ENCODE measurements at regions of chr21 and their contacts with region 1.

Region 1: DNA sequence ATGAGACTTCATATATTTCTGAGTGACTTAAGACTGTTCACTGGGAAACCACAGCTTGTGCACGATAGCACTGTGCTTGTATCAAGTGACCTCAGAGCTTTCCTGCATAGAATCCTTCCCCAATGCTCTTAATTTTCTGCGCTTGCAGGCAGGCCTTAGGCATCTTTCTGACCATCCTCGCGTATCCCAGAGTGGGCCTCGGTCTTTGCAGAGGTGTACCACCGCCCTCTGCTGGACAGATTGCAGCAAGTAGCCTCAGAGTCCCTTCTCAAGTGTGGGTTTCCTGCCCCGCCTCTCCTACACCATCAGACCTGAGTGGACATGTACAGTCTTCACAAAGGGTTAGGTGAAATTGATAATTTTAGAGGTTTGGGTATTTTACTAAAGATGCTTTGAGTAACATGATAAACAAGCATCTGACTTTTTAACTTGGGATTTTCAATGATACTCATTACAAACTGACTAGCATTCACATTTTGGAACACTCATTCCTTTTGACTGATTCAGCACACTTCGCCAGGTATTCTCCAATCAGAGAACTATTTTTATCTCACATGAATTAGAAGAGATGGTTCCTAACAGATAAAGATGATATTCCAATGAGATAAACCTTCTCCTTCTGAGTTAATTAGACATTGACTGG is 246.5 kb upstream of the USP25 start:
- DNase-seq: peak; percentile 65 to 88 (median 85)
- ATAC-seq: peak; percentile 97 to 100 (median 100)
- H3K4me3 ChIP-seq: no peak overlapping the region
- H3K27ac ChIP-seq: no peak overlapping the region
- H3K4me1 ChIP-seq: no peaks in the 10 kb centered on the region
- H3K27me3 ChIP-seq: no peaks in the 10 kb centered on the region
- CTCF ChIP-seq: peak; percentile 67 to 90 (median 88)

Region 2: DNA sequence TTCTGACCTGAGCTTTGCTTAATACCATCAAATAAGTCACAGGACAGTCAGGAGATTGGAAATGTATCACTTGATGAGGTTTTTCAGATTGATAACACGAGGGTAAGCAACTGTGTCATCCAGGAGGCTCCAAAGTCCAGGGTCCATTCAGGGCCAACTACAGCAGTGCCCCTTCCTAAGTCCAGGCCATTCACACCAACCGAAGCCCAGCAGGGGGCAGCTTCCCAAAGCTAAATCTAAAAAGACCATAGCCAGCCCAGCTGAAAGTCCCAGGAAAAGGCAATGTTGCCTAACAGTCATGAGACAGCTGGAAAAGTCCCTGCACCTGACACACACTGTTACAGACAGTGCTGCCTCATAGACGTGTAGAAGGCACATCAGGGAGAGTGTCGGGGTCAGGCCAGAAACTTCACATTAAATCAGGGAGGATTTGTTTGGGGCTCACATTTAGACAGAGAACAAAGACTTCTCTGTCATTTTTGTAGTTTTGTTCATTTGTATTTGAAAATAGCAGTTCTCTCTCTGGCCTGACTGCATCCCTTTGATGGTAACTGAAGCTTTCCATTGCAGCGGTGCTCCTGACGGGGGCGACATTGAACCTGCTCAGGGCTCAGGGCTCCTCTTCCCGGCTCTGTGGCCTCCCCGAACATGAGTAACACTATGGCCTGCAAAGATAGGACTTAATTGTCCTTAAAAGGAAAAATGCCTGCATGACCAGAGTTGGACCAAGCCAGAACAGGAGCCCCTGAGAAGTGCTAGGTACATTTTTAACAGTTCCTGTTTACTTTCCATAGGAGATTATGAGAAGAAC is 618.8 kb before region 1 on chr21:
- intact Hi-C with region 1: loop called in 2 of 3 experiments (anchors 10 kb)
- DNase-seq: peak; percentile 46 to 78 (median 63)
- ATAC-seq: peak; percentile 90 to 95 (median 94)
- H3K4me3 ChIP-seq: no peak overlapping the region
- H3K27ac ChIP-seq: peak overlapping the region in 2 of 4 donors; percentile 6 to 45
- H3K4me1 ChIP-seq: peaks cover 0 to 7% (median 0%) of the 10 kb centered on the region in 3 donors
- H3K27me3 ChIP-seq: no peaks in the 10 kb centered on the region
- CTCF ChIP-seq: peak in 3 of 4 donors; percentile 14 to 37 (median 26)

Region 3: GRCh38 chr21:15064576-15065391 is 418.5 kb before region 1 on chr21 and contains the start of gene NRIP1:
- intact Hi-C with region 1: loop called in 1 of 3 experiments (anchors 5 kb)
- DNase-seq: peak; percentile 92 to 95 (median 94)
- ATAC-seq: peak; percentile 84 to 92 (median 88)
- H3K4me3 ChIP-seq: peak within 1 kb of the TSS; percentile 76 to 99 (median 90)
- H3K27ac ChIP-seq: peak within 1 kb of the TSS; percentile 92 to 97 (median 96)
- H3K4me1 ChIP-seq: peaks cover 11 to 27% (median 23%) of the 10 kb centered on the region in 3 donors
- H3K27me3 ChIP-seq: no peaks in the 10 kb centered on the region
- CTCF ChIP-seq: no peak
- total RNA-seq, gene NRIP1: 23.4 to 33.5 (median 25.1) TPM

Region 4: DNA sequence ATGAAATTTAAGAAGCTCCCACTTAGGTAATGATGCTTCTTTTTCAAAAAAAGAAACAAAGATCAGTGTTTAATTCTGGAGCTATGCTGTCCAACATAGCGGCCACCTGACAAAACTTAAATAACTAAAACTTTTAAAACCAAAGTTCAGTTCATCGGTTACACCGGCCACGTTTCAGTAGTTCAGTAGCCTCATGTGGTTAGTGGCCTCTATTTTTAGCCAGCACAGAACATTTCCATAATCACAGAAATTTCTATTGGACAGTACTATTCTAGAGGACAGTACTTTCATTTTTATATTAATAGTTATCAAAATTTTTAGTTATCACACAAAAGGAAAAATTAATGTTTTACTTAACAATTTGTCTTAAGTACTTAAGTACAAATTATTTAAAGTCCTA is 387.6 kb after region 1 on chr21:
- intact Hi-C with region 1: no loop called
- DNase-seq: no peak
- ATAC-seq: no peak
- H3K4me3 ChIP-seq: no peak overlapping the region
- H3K27ac ChIP-seq: no peak overlapping the region
- H3K4me1 ChIP-seq: no peaks in the 10 kb centered on the region
- H3K27me3 ChIP-seq: no peaks in the 10 kb centered on the region
- CTCF ChIP-seq: no peak